Adrenal gland (tissue), 19 donors: ENCODE measurements at regions of chr12 and their contacts with region 1.

Region 1: GRCh38 chr12:12376646-12377448 is 20.0 kb downstream of the BORCS5 start:
- DNase-seq: peak in 4 of 7 donors; percentile 33 to 57 (median 41)
- H3K4me3 ChIP-seq: no peak overlapping the region
- H3K27ac ChIP-seq: no peak overlapping the region
- H3K4me1 ChIP-seq: peaks cover 0 to 9% of the 10 kb centered on the region in 2 donors
- H3K27me3 ChIP-seq: no peaks in the 10 kb centered on the region
- CTCF ChIP-seq: peak; percentile 78 to 96 (median 88)
- POLR2A ChIP-seq: no peak

Region 2: GRCh38 chr12:12562585-12563261 is 185.9 kb after region 1 on chr12 and contains the start of gene DUSP16:
- intact Hi-C with region 1: loop called (anchors 5 to 10 kb)
- DNase-seq: peak; percentile 92 to 97 (median 94)
- H3K4me3 ChIP-seq: peak within 1 kb of the TSS; percentile 49 to 99 (median 74)
- H3K27ac ChIP-seq: peak within 1 kb of the TSS; percentile 98 to 100 (median 99)
- H3K4me1 ChIP-seq: peaks cover 15 to 23% of the 10 kb centered on the region in 2 donors
- H3K27me3 ChIP-seq: no peaks in the 10 kb centered on the region
- CTCF ChIP-seq: peak in 4 of 6 experiments; percentile 29 to 46 (median 32)
- POLR2A ChIP-seq: peak; percentile 88 to 96
- total RNA-seq, gene DUSP16: 36.4 to 374 (median 110) TPM

Region 3: DNA sequence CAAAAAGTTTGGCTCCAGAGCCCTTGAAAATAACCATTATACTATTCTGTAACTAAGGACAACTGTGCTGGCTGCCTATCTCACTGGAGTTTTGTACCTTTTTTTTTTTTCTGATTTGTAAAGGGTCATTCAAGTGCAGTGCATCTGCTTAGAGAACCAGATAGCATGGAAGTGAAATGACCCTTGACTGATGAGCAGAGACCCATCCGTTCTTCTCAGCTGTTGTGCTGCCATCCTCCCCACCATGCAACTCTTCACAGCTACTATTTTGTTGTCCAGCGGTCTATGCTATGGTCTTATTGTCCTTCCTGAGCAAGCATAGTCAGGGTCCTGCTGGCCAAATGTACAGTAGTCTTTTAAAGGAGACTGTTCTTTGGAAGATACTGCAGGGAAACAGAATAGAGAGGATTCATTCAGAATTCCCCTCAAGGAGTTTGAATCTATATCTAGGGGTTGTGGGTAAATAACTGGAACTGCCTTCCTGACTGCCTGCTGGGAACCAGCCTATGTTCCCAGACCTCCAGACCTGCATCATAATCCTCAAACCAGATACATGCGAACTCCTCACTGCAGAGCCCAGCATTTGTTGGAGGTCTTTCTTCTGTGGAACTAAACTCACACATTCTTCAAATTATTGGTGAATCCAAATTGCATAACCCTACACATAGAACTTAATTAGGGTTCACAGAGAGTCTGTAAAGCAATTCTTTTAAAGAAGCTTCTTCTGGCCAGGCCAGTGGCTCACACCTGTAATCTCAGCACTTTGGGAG is 278.0 kb after region 1 on chr12:
- intact Hi-C with region 1: loop called in 1 of 2 experiments (anchors 5 kb)
- DNase-seq: no peak
- H3K4me3 ChIP-seq: no peak overlapping the region
- H3K27ac ChIP-seq: no peak overlapping the region
- H3K4me1 ChIP-seq: peaks cover 4 to 12% of the 10 kb centered on the region in 2 donors
- H3K27me3 ChIP-seq: no peaks in the 10 kb centered on the region
- CTCF ChIP-seq: no peak
- POLR2A ChIP-seq: no peak

Region 4: DNA sequence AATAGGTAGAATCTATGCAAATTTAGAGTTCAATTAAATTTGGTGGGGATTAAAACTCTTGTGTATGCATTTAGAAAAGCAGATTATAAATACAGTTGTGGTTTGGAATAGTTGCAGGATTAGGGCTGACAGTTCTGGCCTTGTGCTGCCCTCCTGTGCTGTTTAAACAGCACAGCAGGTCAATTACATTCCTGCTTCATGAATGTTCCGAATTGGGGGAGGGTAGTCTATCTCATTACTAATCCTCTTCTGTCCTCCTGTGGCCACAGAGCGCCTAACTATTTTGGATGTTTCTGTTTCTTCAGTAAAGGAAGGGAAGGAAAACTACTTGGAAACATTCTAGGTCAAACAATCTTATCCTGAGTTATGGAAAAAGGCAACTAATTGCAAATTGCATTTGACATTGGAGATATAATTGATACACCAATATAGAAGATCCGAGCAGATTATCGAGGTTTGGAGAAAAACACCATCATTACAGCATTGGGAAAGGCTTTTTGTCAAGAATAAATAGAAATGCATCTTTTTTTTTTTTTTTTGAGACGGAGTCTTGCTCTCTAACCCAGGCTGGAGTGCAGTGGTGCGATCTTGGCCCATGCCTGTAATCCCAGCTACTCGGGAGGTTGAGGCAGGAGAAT is 327.9 kb after region 1 on chr12:
- intact Hi-C with region 1: loop called (anchors 5 to 10 kb)
- DNase-seq: peak; percentile 70 to 90 (median 79)
- H3K4me3 ChIP-seq: no peak overlapping the region
- H3K27ac ChIP-seq: no peak overlapping the region
- H3K4me1 ChIP-seq: peaks cover 0 to 7% of the 10 kb centered on the region in 2 donors
- H3K27me3 ChIP-seq: no peaks in the 10 kb centered on the region
- CTCF ChIP-seq: peak; percentile 76 to 100 (median 100)
- POLR2A ChIP-seq: no peak